Colonic mucosa (tissue), 4 donors: ENCODE measurements at regions of chr4 and their contacts with region 1.

Region 1: DNA sequence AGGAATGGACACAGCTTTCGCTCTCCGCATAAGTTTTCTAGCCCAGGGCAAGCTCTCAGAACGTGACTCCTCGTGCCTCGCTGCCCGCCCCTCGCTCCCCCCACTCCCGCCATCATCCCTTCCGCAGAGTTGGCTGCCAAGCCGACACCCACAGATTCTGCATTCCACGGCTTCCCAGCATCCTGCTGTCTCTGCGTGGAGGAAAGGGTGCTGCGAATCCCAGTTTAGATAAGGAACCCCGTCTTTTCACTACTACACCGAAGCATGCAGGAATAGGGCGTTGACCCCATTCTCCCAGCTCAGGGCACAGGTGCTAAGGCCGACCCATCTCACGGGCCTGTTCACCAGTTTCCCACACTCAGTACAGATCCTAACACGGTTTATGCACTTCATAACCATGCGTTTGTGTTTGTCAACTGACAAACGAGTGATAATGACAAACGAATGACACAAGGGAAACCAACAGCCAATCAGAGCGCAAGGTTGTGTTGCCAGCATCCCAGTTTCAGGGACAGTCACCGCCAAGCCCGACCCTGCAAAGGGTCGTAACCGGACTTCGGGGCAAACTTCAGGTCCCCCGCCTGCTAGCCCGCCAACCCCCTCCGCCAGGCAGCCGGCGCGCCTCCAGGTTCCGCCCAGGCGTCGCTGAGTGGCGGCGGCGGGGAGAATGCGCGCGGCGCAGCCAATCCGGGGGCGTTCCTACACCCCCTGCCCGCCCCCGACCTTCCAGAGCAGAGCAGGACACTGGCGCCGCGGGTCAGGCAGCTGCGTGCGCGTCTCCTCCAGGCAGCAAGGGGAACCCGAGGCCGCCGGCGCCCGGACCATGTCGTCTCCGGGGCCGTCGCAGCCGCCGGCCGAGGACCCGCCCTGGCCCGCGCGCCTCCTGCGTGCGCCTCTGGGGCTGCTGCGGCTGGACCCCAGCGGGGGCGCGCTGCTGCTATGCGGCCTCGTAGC is at the start of gene CYP2U1:
- DNase-seq: peak; percentile 86
- H3K4me3 ChIP-seq: peak within 1 kb of the TSS; percentile 73
- H3K27ac ChIP-seq: peak within 1 kb of the TSS; percentile 39
- H3K4me1 ChIP-seq: no peaks in the 10 kb centered on the region
- H3K27me3 ChIP-seq: no peaks in the 10 kb centered on the region
- CTCF ChIP-seq: peak; percentile 26
- total RNA-seq, gene CYP2U1: 2.4 to 4.2 TPM

Region 2: DNA sequence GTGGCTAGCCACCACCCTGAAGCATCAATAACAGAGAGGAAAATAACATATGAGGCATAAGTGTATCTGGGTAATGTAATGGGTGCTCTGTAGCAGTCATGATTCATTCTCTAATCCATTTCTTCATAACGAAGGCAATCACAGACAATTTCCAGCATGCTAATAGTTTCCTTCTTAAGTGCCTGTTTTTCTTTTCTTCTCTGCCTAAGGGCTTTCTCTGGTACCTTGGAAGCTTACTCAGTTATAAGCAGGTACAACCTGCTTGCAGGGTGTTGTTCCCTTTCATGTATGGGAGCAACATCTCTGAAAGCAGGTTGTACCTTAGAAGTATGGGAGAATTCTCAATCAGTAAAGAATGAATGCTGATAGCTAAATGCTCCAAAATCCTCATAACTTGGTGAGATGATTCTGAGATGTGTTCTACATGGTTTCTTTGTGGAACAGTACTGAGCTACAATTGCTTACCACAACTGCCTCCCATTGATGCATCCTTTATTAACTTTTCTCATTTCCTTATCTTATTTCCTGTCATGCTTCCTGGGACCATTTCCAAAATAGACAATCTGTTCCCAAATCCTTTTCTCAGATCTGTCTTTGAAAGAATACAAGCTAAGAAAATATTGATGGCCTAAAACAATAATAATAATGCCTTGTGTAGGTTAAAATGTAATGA is 458.7 kb before region 1 on chr4:
- intact Hi-C with region 1: no loop called
- DNase-seq: no peak
- H3K4me3 ChIP-seq: no peak overlapping the region
- H3K27ac ChIP-seq: no peak overlapping the region
- H3K4me1 ChIP-seq: no peaks in the 10 kb centered on the region
- H3K27me3 ChIP-seq: no peaks in the 10 kb centered on the region
- CTCF ChIP-seq: no peak

Region 3: GRCh38 chr4:107989537-107990386 is 58.7 kb after region 1 on chr4 and contains the start of gene HADH:
- intact Hi-C with region 1: loop called (anchors 5 kb)
- DNase-seq: peak; percentile 95
- H3K4me3 ChIP-seq: peak within 1 kb of the TSS; percentile 75
- H3K27ac ChIP-seq: peak within 1 kb of the TSS; percentile 80
- H3K4me1 ChIP-seq: peaks cover 4% of the 10 kb centered on the region
- H3K27me3 ChIP-seq: no peaks in the 10 kb centered on the region
- CTCF ChIP-seq: no peak
- total RNA-seq, gene HADH: 121 to 213 TPM